Activated CD4-positive, alpha-beta T cell treated with anti-CD3 and anti-CD28 coated beads for 36 hours (primary cell): ENCODE measurements at regions of chr22 and their contacts with region 1.

Region 1: DNA sequence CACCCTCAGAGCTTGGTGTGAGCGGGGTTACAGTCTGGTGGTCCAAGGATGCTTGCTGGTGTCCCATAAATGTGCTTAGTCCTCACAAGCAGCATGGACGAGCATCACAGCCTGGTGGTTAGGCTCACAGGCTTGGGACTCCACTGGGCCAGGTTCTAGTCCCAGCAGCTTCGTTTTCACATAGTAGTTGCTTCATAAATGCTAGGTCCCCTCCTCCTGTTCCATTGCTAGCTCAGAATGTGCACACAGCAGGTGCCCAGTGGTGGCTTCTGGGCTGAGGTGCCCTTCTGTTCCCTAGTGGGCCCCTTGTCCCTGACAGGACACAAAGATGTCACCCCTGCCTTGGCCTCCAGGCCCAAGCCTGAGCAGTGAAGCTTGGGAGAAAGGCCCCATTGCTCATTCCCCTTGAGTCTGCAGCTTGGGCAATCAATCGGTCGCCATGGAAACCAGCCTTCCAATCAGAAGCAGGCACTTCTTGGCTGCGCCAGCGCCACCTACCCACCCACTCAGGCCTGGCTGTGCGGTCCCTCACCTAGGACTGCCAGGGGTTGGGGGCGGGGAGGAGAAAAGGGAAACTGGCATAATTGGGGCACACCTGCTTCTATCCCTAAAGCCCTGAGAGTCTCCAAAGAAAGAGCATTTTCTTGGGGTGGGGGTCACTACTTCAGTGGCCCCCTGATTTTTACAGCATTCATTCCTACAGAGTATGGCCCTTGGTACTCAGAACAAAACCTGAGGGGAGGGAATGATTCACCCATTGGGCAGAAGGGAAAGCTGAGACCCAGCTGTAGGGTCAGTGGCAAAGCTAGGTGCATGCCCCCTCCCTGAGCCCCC is 48.1 kb downstream of the CYTH4 start:
- DNase-seq: peak; percentile 80
- ATAC-seq: peak; percentile 86
- H3K4me3 Mint-ChIP-seq: no peak overlapping the region
- H3K27ac Mint-ChIP-seq: no peak overlapping the region
- H3K4me1 Mint-ChIP-seq: peaks cover 7% of the 10 kb centered on the region
- H3K27me3 Mint-ChIP-seq: peaks cover 41% of the 10 kb centered on the region

Region 2: DNA sequence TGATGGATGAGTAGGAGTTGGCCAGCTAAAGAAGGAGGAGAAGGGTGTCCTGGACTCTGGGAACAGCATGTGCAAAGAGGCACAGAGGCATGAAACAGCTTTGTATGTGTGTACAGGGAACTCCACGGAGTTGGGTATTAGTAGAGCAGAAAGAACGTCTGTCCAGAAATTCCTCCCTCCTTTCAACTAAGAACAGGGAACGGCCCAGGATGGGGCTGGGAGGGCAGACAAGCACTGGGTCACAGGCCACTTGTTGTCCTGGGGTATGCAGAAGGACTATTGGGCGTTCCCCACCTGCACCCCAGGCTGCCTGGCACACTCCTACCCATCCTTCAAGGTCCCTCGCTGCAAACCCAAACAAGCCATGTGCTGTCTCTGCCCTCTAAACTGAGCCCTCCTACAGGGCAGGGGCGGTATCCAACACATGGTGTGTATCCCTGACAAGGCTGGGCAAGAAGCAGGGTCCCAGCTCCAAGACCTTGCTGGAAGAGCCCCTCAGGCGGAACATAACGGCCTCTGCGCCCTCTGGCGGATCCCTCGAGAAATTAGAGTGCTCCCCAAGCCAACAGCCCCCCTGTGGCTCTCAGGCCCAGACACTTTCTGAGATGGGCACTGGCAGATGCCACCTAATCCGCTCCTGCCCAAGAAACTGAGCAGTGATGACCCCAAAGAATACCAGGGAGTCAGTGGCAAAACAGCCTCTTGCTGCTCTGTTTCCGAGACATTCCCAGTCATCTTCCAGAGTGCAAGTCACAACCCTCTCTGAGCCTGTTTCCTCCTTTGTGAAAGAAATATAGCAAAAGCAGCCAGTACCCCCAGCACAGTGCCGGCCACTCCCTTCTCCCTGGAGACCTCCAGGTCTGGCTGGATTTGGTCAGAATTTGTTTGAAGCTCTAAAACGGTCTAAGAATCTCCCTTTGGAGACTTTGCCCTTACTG is 98.5 kb after region 1 on chr22:
- CTCF ChIA-PET with region 1: interaction called, 3 read pairs
- POLR2A ChIA-PET with region 1: no interaction called
- intact Hi-C with region 1: loop called in 1 of 2 experiments (anchors 5 kb)
- DNase-seq: peak; percentile 74
- ATAC-seq: peak; percentile 21
- H3K4me3 Mint-ChIP-seq: no peak overlapping the region
- H3K27ac Mint-ChIP-seq: no peak overlapping the region
- H3K4me1 Mint-ChIP-seq: peaks cover 17% of the 10 kb centered on the region
- H3K27me3 Mint-ChIP-seq: peaks cover 50% of the 10 kb centered on the region